ENCODE measurements at regions of chr19 and their contacts with region 1.

Region 1: DNA sequence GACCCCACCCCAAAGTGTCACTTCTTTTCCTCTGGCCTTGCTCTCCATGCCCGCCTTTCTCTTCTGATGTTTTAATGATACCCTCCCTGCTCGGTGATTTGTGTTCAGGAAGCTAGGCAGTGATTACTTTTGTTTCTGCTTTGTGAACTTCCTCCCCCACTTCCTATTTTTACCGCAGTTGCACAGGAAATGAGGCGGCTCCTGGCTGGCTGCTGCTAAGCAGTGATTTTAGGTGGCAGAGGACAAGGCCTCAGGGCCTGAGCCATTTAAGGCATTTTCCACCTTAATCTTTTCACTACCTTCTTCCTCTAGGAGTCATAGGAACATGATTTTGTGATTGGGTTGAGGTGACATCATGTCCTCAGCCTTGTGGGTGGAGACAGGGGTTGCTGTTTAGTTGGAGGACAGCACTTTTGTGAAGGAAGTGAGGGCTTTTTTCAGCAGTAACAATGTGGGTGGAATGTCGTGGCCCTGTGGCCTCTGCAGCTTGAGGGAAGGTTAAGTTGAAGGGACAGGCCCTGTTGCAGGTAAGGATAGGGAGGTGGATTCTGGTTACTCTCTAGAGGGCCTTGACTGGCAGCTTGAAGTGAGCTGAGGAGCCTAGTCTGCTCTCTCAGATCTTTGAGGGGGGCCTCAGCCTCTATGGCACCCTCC is 15.7 kb downstream of the GARRE1 start:
- DNase-seq: peak; percentile 33 to 93 (median 91)
- ATAC-seq: peak; percentile 95
- H3K4me3 ChIP-seq: peak overlapping the region; percentile 28
- H3K4me3 Mint-ChIP-seq: peak overlapping the region; percentile 47 to 87 (median 76)
- H3K27ac ChIP-seq: peak overlapping the region; percentile 84
- H3K27ac Mint-ChIP-seq: peak overlapping the region; percentile 81 to 99 (median 98)
- H3K4me1 ChIP-seq: peaks cover 37 to 72% of the 10 kb centered on the region in 2 donors
- H3K4me1 Mint-ChIP-seq: peaks cover 32 to 90% (median 84%) of the 10 kb centered on the region in 7 donors
- H3K27me3 ChIP-seq: no peaks in the 10 kb centered on the region
- H3K27me3 Mint-ChIP-seq: no peaks in the 10 kb centered on the region

Region 2: GRCh38 chr19:33720691-33721682 is 549.1 kb before region 1 on chr19:
- CTCF ChIA-PET with region 1: no interaction called
- POLR2A ChIA-PET with region 1: no interaction called
- intact Hi-C with region 1: no loop called
- DNase-seq: no peak
- ATAC-seq: peak; percentile 12
- H3K4me3 ChIP-seq: no peak overlapping the region
- H3K4me3 Mint-ChIP-seq: no peak overlapping the region
- H3K27ac ChIP-seq: no peak overlapping the region
- H3K27ac Mint-ChIP-seq: no peak overlapping the region
- H3K4me1 ChIP-seq: no peaks in the 10 kb centered on the region
- H3K4me1 Mint-ChIP-seq: peaks cover 0 to 2% (median 0%) of the 10 kb centered on the region in 7 donors
- H3K27me3 ChIP-seq: no peaks in the 10 kb centered on the region
- H3K27me3 Mint-ChIP-seq: peaks cover 0 to 54% (median 20%) of the 10 kb centered on the region in 5 donors

Region 3: GRCh38 chr19:33731881-33732280 is 538.2 kb before region 1 on chr19:
- CTCF ChIA-PET with region 1: no interaction called
- POLR2A ChIA-PET with region 1: no interaction called
- intact Hi-C with region 1: no loop called
- DNase-seq: no peak
- ATAC-seq: no peak
- H3K4me3 ChIP-seq: no peak overlapping the region
- H3K4me3 Mint-ChIP-seq: no peak overlapping the region
- H3K27ac ChIP-seq: no peak overlapping the region
- H3K27ac Mint-ChIP-seq: no peak overlapping the region
- H3K4me1 ChIP-seq: no peaks in the 10 kb centered on the region
- H3K4me1 Mint-ChIP-seq: no peaks in the 10 kb centered on the region
- H3K27me3 ChIP-seq: no peaks in the 10 kb centered on the region
- H3K27me3 Mint-ChIP-seq: peaks cover 0 to 30% (median 14%) of the 10 kb centered on the region in 5 donors

Region 4: GRCh38 chr19:34171877-34172660 is 98.0 kb before region 1 on chr19 and contains the start of gene LSM14A:
- CTCF ChIA-PET with region 1: no interaction called
- POLR2A ChIA-PET with region 1: interaction called, 12 read pairs
- intact Hi-C with region 1: loop called in 1 of 2 experiments (anchors 1 kb)
- DNase-seq: peak; percentile 90 to 97 (median 95)
- ATAC-seq: peak; percentile 94
- H3K4me3 ChIP-seq: peak within 1 kb of the TSS; percentile 94
- H3K4me3 Mint-ChIP-seq: peak within 1 kb of the TSS; percentile 91 to 100 (median 96)
- H3K27ac ChIP-seq: peak within 1 kb of the TSS; percentile 95
- H3K27ac Mint-ChIP-seq: peak within 1 kb of the TSS; percentile 96 to 99 (median 99)
- H3K4me1 ChIP-seq: peaks cover 27 to 29% of the 10 kb centered on the region in 2 donors
- H3K4me1 Mint-ChIP-seq: peaks cover 29 to 51% (median 44%) of the 10 kb centered on the region in 7 donors
- H3K27me3 ChIP-seq: no peaks in the 10 kb centered on the region
- H3K27me3 Mint-ChIP-seq: no peaks in the 10 kb centered on the region
- total RNA-seq, gene LSM14A: 124 to 189 (median 166) TPM

Region 5: DNA sequence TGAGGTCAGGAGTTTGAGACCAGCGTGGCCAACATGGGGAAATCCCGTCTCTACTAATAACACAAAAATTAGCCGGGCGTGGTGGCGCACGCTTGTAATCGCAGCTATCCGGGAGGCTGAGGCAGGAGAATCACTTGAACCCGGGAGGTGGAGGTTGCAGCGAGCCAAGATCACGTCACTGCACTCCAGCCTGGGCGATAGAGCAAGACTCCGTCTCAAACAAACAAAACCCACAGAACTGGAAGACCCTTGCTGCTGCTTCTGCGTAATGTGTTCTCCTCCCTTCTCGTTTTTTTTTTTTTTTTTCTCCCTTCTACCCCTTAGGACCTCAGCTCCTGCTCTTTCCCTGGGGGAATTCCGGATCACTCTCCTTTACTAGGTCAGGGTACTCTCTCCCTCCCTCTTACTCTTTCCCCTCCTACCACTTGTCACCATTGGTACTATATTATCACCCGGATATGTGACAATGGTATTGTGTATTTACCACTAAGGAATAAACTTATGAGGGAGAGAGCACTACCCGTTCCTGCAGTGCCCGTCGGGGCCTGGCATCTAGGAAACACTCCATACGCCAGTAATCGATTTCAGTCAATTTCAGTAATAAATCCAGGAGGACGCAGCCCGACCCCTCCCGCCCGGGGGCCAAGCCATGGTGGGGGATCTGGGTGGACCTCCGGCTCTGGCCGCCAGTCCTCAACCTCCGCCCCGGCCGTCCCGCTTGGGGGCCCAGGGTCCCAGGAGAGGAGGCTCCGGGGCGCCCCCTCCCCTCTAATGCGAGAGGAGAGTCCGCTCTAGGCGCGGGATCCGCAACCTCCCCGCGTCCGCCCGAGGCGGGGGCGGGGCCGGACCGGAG is 16.2 kb before region 1 on chr19:
- CTCF ChIA-PET with region 1: no interaction called
- POLR2A ChIA-PET with region 1: interaction called, 12 read pairs
- intact Hi-C with region 1: loop called (anchors 1 to 2 kb)
- DNase-seq: peak in 7 of 9 donors; percentile 75 to 88 (median 86)
- ATAC-seq: peak; percentile 51
- H3K4me3 ChIP-seq: peak overlapping the region; percentile 72
- H3K4me3 Mint-ChIP-seq: peak overlapping the region; percentile 86 to 100 (median 96)
- H3K27ac ChIP-seq: peak overlapping the region; percentile 97
- H3K27ac Mint-ChIP-seq: peak overlapping the region; percentile 94 to 100 (median 97)
- H3K4me1 ChIP-seq: peaks cover 6 to 27% of the 10 kb centered on the region in 2 donors
- H3K4me1 Mint-ChIP-seq: peaks cover 12 to 48% (median 36%) of the 10 kb centered on the region in 7 donors
- H3K27me3 ChIP-seq: no peaks in the 10 kb centered on the region
- H3K27me3 Mint-ChIP-seq: no peaks in the 10 kb centered on the region

Region 6: GRCh38 chr19:34288381-34288780 is 18.3 kb after region 1 on chr19:
- CTCF ChIA-PET with region 1: interaction called, 3 read pairs
- POLR2A ChIA-PET with region 1: interaction called, 12 read pairs
- intact Hi-C with region 1: no loop called
- DNase-seq: no peak
- ATAC-seq: no peak
- H3K4me3 ChIP-seq: no peak overlapping the region
- H3K4me3 Mint-ChIP-seq: peak overlapping the region in 6 of 10 donors; percentile 6 to 50 (median 31)
- H3K27ac ChIP-seq: no peak overlapping the region
- H3K27ac Mint-ChIP-seq: peak overlapping the region in 7 of 9 donors; percentile 29 to 88 (median 64)
- H3K4me1 ChIP-seq: peaks cover 0 to 12% of the 10 kb centered on the region in 2 donors
- H3K4me1 Mint-ChIP-seq: peaks cover under 1 to 41% (median 23%) of the 10 kb centered on the region in 7 donors
- H3K27me3 ChIP-seq: no peaks in the 10 kb centered on the region
- H3K27me3 Mint-ChIP-seq: no peaks in the 10 kb centered on the region

Region 7: DNA sequence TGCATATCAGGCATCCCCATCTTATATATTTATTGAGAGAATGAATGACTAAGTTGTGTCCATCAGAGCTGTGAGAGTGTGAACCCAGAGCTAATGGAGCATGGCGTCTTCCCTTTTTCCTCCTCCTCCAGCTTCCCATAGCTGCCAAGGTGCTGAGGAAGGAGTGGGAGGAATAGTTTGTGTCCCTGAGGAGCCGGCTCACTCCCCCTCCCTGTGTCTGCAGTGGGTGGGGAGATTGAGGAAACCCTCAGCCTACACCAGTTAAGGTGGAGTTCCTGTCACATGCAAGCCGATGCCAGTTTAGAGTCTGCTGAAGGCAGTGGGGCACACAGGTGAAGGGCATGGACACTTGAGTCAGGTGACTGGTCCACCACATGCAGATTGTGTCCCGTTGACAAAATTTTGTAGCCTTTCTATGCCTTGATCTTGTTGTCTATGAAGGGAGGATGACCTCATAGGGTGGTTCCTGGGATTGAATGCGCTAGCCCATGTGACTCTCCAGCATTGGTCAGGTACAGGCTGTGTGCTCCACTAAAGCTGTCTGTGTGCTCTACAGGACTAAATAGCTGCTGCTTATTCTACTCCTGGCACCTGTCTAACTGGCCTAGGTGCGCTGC is 47.3 kb after region 1 on chr19:
- CTCF ChIA-PET with region 1: interaction called, 5 read pairs
- POLR2A ChIA-PET with region 1: interaction called, 12 read pairs
- intact Hi-C with region 1: no loop called
- DNase-seq: peak in 7 of 9 donors; percentile 27 to 58 (median 37)
- ATAC-seq: peak; percentile 79
- H3K4me3 ChIP-seq: peak overlapping the region; percentile 11
- H3K4me3 Mint-ChIP-seq: peak overlapping the region in 9 of 10 donors; percentile 67 to 79 (median 73)
- H3K27ac ChIP-seq: no peak overlapping the region
- H3K27ac Mint-ChIP-seq: peak overlapping the region; percentile 7 to 95 (median 82)
- H3K4me1 ChIP-seq: peaks cover 3 to 26% of the 10 kb centered on the region in 2 donors
- H3K4me1 Mint-ChIP-seq: peaks cover 13 to 68% (median 54%) of the 10 kb centered on the region in 7 donors
- H3K27me3 ChIP-seq: no peaks in the 10 kb centered on the region
- H3K27me3 Mint-ChIP-seq: no peaks in the 10 kb centered on the region

Region 8: DNA sequence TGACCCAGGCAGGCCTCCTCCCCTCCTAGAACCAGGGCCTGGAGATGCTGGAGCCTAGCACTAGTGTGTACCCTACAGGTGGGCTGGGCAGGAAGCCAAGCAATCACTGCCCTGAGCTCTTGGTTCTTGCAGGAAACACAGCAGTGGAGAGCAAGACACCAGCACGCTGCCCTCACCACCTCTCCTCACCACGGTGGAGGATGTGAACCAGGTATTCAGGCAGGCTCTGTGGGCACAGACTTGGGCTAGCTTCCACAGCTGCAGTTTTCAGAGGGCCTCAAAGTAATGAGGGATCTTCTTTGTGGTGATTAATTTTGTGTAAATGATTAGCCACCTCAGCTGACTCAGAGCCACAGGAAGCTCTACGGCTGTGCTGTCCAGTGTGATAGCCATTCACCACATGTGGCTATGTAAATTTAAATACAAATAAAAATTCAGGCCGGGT is 81.3 kb after region 1 on chr19:
- CTCF ChIA-PET with region 1: interaction called, 6 read pairs
- POLR2A ChIA-PET with region 1: interaction called, 3 read pairs
- intact Hi-C with region 1: loop called in 1 of 2 experiments (anchors 1 kb)
- DNase-seq: peak in 1 of 9 donors; percentile 16
- ATAC-seq: no peak
- H3K4me3 ChIP-seq: no peak overlapping the region
- H3K4me3 Mint-ChIP-seq: peak overlapping the region in 7 of 10 donors; percentile 12 to 75 (median 45)
- H3K27ac ChIP-seq: peak overlapping the region; percentile 43
- H3K27ac Mint-ChIP-seq: peak overlapping the region in 8 of 9 donors; percentile 76 to 91 (median 86)
- H3K4me1 ChIP-seq: peaks cover 18 to 25% of the 10 kb centered on the region in 2 donors
- H3K4me1 Mint-ChIP-seq: peaks cover 13 to 41% (median 26%) of the 10 kb centered on the region in 7 donors
- H3K27me3 ChIP-seq: no peaks in the 10 kb centered on the region
- H3K27me3 Mint-ChIP-seq: no peaks in the 10 kb centered on the region

Measured in naive thymus-derived CD4-positive, alpha-beta T cell (primary cell).